Sigmoid colon (tissue), 7 donors: ENCODE measurements at regions of chr6 and their contacts with region 1.

Region 1: GRCh38 chr6:53326372-53327016 is 22.3 kb downstream of the ELOVL5 start:
- DNase-seq: peak; percentile 90
- H3K4me3 ChIP-seq: no peak overlapping the region
- H3K27ac ChIP-seq: peak overlapping the region; percentile 75 to 86 (median 81)
- H3K4me1 ChIP-seq: peaks cover 0 to 66% (median 53%) of the 10 kb centered on the region in 4 donors
- H3K27me3 ChIP-seq: no peaks in the 10 kb centered on the region
- CTCF ChIP-seq: no peak
- EP300 ChIP-seq: peak in 3 of 4 donors; percentile 12 to 63 (median 27)
- POLR2A ChIP-seq: no peak

Region 2: GRCh38 chr6:53313784-53314400 is 12.6 kb before region 1 on chr6:
- intact Hi-C with region 1: loop called (anchors 2 kb)
- DNase-seq: no peak
- H3K4me3 ChIP-seq: no peak overlapping the region
- H3K27ac ChIP-seq: peak overlapping the region in 3 of 4 donors; percentile 1 to 63 (median 50)
- H3K4me1 ChIP-seq: peaks cover 0 to 63% (median 48%) of the 10 kb centered on the region in 4 donors
- H3K27me3 ChIP-seq: no peaks in the 10 kb centered on the region
- CTCF ChIP-seq: peak in 1 of 4 experiments; percentile 20
- EP300 ChIP-seq: peak in 1 of 4 donors; percentile 33
- POLR2A ChIP-seq: no peak